ENCODE measurements at regions of chr2 and their contacts with region 1.

Region 1: DNA sequence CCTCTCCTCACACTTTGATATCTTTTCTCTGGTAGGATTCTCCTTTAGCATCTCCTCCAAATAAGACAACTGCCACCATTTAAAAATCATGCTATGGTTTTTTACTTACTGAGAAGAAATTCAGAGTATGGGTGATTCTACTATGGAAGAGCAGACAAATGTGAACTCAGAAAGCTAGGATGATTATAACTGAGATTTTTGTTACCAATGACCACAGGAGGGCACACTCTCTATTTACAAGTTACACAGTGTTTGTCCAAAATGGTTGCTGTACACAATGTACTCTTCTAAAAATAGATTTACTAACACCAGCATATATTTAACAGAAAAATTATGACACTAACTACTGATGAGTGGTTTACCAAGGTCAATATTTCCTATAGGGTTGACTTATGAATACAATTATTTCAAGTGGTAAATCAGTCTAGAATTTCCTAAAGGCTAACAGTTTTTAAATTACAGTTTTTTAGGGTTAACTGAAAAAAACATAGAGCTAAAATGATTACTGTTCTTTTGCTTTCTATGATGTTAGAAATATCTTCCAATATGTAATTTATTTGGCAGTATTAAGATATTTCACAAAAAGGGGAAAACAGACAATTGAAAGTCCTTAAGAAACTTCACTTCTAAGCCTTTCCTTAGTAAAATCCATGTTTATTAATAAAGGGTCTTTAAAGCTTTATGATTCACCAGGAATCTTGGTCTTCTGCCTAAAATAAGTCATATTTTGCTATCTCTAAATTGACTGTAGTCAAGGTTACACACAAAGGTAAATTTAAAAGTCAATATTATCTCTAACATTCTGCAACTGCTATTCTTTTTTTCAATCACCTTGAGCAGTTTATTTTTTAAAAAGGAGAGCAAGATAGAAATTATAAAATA is 57.2 kb downstream of the MAP4K3 start:
- DNase-seq: peak; percentile 7
- H3K4me3 ChIP-seq: no peak overlapping the region
- CTCF ChIP-seq: peak; percentile 52

Region 2: DNA sequence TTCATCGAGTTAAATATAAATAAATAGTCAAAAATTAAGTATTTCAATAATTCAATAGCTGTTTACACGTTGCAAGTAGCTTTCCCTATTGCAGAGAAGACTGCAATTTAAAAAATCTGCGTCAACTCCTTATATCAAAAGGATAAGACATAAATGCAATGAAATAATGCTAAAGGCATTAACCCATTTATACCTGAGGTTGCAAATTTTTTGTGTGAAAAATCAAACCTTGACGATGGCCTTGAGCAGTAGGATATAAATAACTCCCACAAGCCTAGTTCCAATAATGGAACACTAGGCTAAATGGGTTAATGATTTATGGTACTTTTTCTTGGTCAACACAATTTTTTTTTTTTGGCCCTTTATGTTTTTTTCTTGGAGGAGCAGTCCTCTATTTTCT is 59.7 kb before region 1 on chr2:
- CTCF ChIA-PET with region 1: no interaction called
- POLR2A ChIA-PET with region 1: no interaction called
- DNase-seq: no peak
- H3K4me3 ChIP-seq: no peak overlapping the region
- CTCF ChIP-seq: no peak

Region 3: GRCh38 chr2:39394516-39394961 is 14.7 kb after region 1 on chr2:
- CTCF ChIA-PET with region 1: interaction called, 14 read pairs
- POLR2A ChIA-PET with region 1: no interaction called
- DNase-seq: no peak
- H3K4me3 ChIP-seq: no peak overlapping the region
- CTCF ChIP-seq: no peak

Region 4: GRCh38 chr2:39411181-39411944 is 31.5 kb after region 1 on chr2:
- CTCF ChIA-PET with region 1: interaction called, 14 read pairs
- POLR2A ChIA-PET with region 1: no interaction called
- DNase-seq: peak; percentile 60
- H3K4me3 ChIP-seq: peak overlapping the region; percentile 7; the same call in 1 of the 2 replicates
- CTCF ChIP-seq: no peak

Region 5: DNA sequence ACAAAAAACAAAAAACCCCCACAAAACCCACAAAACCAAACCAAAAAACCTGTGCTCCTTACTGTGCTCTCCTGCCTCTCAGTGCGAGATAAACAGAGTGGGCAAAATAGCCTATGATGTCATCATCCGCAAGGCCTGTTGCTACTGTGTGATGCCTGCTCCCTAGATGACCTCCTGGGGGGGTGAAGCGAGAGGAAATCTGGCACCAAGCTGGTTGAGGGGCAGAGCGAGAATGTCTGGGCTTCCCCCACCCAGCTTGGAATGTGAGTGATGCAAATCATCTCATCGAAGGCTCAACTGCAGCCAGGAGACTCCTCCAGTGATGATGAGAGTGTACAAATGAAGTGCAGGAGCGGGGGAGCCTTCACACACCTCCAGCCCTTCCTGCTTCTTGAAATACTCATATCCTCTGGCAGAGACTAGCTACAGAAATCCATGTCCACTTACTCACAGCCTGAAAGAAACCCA is 114.9 kb after region 1 on chr2:
- CTCF ChIA-PET with region 1: interaction called, 17 read pairs
- POLR2A ChIA-PET with region 1: no interaction called
- DNase-seq: peak; percentile 97
- H3K4me3 ChIP-seq: no peak overlapping the region
- CTCF ChIP-seq: no peak

Region 6: DNA sequence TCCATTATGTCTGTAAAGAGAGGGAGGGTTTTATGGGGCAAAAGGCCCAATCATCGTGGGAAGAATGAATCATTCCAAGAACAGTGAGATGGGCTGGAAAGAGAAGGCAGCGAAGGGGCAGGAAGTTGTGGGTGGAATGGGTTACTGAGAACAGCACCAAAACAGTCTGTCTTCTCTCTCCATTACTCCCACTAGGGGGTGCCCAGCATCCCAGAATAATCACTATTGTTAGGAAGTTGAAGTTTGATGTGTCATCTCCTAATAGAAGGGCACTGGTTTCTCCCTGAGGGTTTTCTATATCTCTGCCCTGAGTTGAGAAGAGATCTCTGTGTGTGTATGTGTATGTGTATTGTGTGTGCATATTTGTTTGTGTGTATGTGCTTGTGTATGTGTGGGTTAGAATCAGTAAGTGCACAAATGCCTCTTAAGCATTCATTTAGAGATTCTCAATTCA is 133.8 kb after region 1 on chr2:
- CTCF ChIA-PET with region 1: interaction called, 11 read pairs
- POLR2A ChIA-PET with region 1: no interaction called
- DNase-seq: peak; percentile 85
- H3K4me3 ChIP-seq: no peak overlapping the region
- CTCF ChIP-seq: peak; percentile 73

Region 7: GRCh38 chr2:39532933-39533332 is 153.0 kb after region 1 on chr2:
- CTCF ChIA-PET with region 1: interaction called, 17 read pairs
- POLR2A ChIA-PET with region 1: no interaction called
- DNase-seq: no peak
- H3K4me3 ChIP-seq: no peak overlapping the region
- CTCF ChIP-seq: no peak

Region 8: GRCh38 chr2:39696838-39697237 is 317.0 kb after region 1 on chr2:
- CTCF ChIA-PET with region 1: interaction called, 17 read pairs
- POLR2A ChIA-PET with region 1: no interaction called
- DNase-seq: peak; percentile 28
- H3K4me3 ChIP-seq: no peak overlapping the region
- CTCF ChIP-seq: no peak

Measured in AG04449 (cell line).